ENCODE measurements at regions of chr19 and their contacts with region 1.

Region 1: GRCh38 chr19:2475702-2476450 is at the start of gene GADD45B:
- DNase-seq: peak; percentile 97
- ATAC-seq: peak; percentile 57
- H3K4me3 Mint-ChIP-seq: peak within 1 kb of the TSS; percentile 100
- H3K27ac Mint-ChIP-seq: peak within 1 kb of the TSS; percentile 91
- H3K4me1 Mint-ChIP-seq: peaks cover 21% of the 10 kb centered on the region
- H3K27me3 Mint-ChIP-seq: peaks cover 3% of the 10 kb centered on the region
- total RNA-seq, gene GADD45B: 63.4 to 79.4 TPM

Region 2: GRCh38 chr19:2503521-2504109 is 27.7 kb after region 1 on chr19:
- CTCF ChIA-PET with region 1: interaction called, 12 read pairs
- DNase-seq: peak; percentile 84
- ATAC-seq: peak; percentile 90
- H3K4me3 Mint-ChIP-seq: peak overlapping the region; percentile 48
- H3K27ac Mint-ChIP-seq: peak overlapping the region; percentile 93
- H3K4me1 Mint-ChIP-seq: peaks cover 38% of the 10 kb centered on the region
- H3K27me3 Mint-ChIP-seq: peaks cover 12% of the 10 kb centered on the region

Region 3: GRCh38 chr19:2561895-2562294 is 86.0 kb after region 1 on chr19:
- CTCF ChIA-PET with region 1: interaction called, 16 read pairs
- DNase-seq: peak; percentile 86
- ATAC-seq: peak; percentile 89
- H3K4me3 Mint-ChIP-seq: peak overlapping the region; percentile 82
- H3K27ac Mint-ChIP-seq: peak overlapping the region; percentile 99
- H3K4me1 Mint-ChIP-seq: peaks cover 49% of the 10 kb centered on the region
- H3K27me3 Mint-ChIP-seq: no peaks in the 10 kb centered on the region

Region 4: DNA sequence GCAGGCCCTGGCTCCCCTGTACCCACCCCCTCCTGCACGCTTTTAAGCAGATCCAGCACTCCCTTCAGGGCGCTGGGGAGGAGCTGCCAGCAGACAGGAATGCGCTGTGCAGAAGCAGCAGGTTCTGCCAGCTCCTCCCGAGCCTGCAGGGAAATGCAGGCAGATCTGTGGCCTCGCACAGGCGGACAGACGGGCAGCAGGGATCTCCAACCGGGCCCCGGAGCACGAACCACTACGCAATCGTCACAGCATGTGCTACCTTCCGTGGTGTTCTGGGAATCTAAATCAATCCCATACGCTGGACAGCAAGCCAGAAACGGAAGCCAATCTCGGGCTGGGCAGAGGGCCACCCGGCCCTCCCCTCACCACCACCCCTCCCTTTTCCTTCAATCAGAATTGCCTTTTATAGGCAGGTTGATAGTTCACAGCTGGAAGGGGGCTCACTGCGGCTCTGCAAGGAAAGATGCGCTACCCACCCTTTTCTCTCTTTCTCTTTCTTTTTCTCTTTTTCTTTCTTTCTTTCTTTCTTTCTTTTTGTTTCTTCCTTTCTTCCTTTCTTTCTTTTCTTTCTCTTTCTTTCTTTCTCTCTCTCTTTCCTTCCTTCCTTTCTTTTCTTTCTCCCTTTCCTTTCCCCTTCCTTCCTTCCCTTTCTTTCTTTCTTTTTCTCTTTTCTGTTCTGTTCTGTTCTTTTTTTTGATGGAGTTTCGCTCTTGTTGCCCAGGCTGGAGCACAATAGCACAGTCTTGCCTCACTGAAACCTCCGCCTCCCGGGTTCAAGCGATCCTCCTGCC is 126.7 kb after region 1 on chr19:
- CTCF ChIA-PET with region 1: interaction called, 257 read pairs
- DNase-seq: no peak
- ATAC-seq: no peak
- H3K4me3 Mint-ChIP-seq: no peak overlapping the region
- H3K27ac Mint-ChIP-seq: no peak overlapping the region
- H3K4me1 Mint-ChIP-seq: peaks cover 19% of the 10 kb centered on the region
- H3K27me3 Mint-ChIP-seq: peaks cover 13% of the 10 kb centered on the region

Region 5: GRCh38 chr19:2636897-2637683 is 161.2 kb after region 1 on chr19:
- CTCF ChIA-PET with region 1: interaction called, 17 read pairs
- DNase-seq: peak; percentile 80
- ATAC-seq: peak; percentile 84
- H3K4me3 Mint-ChIP-seq: no peak overlapping the region
- H3K27ac Mint-ChIP-seq: no peak overlapping the region
- H3K4me1 Mint-ChIP-seq: no peaks in the 10 kb centered on the region
- H3K27me3 Mint-ChIP-seq: peaks cover 8% of the 10 kb centered on the region

Measured in activated CD8-positive, alpha-beta memory T cell treated with anti-CD3 and anti-CD28 coated beads, Interleukin-2, amount 10 ng/mL, durations not matched to agents 7 days and 5 days (primary cell).